Calu3 (cell line): ENCODE measurements at regions of chr18 and their contacts with region 1.

Region 1: GRCh38 chr18:59631583-59632181 is 65.5 kb downstream of the CCBE1 start:
- DNase-seq: peak; percentile 21
- H3K4me3 Mint-ChIP-seq: no peak overlapping the region
- H3K27ac Mint-ChIP-seq: no peak overlapping the region
- H3K4me1 Mint-ChIP-seq: no peaks in the 10 kb centered on the region
- H3K27me3 Mint-ChIP-seq: peaks cover 46% of the 10 kb centered on the region
- CTCF ChIP-seq: peak; percentile 87

Region 2: DNA sequence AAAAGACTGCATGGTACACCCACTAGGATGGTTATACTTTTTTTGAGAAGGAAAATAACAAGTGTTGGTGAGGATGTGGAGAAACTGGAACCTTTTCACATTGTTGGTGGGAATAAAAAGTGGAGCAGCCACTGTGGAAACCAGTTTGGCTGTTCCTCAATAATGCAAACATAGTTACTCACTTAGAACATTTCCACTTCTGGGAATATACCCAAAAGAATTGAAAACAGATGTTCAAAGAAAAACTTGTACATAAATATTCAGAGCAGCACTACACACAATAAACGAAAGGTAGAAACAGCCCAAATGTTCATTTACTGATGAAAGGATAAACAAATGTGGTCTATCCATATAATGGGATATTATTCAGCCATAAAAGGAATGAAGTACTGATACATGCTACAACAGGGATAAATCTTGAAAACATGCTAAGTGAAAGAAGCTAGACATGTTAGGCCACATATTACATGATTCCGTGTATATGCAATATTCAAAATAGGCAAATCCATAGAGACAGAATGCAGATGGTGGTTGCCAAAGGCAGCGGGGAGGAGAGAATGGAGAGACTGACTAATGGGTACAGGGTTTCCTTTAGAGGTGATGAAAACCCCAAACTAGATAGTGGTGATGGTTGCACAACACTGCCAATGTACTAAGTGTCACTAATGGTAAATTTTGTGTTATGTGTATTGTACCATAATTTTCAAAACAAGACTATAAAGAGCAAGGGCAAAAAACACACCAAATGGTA is 251.7 kb before region 1 on chr18:
- CTCF ChIA-PET with region 1: no interaction called
- intact Hi-C with region 1: no loop called
- DNase-seq: no peak
- H3K4me3 Mint-ChIP-seq: no peak overlapping the region
- H3K27ac Mint-ChIP-seq: no peak overlapping the region
- H3K4me1 Mint-ChIP-seq: peaks cover 12% of the 10 kb centered on the region
- H3K27me3 Mint-ChIP-seq: peaks cover 42% of the 10 kb centered on the region
- CTCF ChIP-seq: no peak

Region 3: DNA sequence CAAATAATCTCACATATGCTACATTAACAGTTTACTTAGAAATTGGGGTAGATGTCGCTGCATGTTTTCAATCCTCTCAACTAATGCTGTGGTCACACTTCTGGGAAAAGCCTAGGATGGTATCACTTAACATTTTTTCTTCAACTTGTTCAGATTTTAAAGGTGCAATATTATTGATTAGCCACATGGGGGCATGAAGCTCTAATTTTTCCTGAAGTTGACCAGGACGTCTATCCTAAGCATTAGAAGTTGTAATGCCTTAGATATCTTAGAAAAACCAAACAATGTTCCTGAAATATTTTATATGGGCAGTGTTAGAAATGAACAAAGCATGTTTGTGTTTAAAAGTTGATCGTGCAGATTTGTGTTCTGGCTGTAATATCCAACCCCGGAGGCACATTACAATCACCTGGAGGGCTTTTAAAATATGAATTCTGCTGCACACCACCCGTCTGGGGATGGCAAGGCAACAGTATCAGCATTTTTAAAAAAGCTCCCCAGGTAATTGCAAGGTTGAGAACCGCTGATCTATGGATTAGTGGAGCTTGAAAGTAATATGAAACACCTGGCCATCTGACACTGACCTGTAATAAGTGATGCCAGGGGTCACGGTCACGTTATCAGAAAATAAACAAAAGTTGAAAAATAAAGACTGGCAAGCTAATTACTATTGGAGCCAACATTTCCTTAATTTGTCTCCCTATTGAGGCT is 172.2 kb before region 1 on chr18:
- CTCF ChIA-PET with region 1: interaction called, 13 read pairs
- intact Hi-C with region 1: no loop called
- DNase-seq: no peak
- H3K4me3 Mint-ChIP-seq: no peak overlapping the region
- H3K27ac Mint-ChIP-seq: no peak overlapping the region
- H3K4me1 Mint-ChIP-seq: no peaks in the 10 kb centered on the region
- H3K27me3 Mint-ChIP-seq: peaks cover 54% of the 10 kb centered on the region
- CTCF ChIP-seq: no peak